Activated CD4-positive, alpha-beta memory T cell treated with anti-CD3 and anti-CD28 coated beads for 36 hours (primary cell): ENCODE measurements at regions of chr15 and their contacts with region 1.

Region 1: GRCh38 chr15:58749532-58750337 is at the start of gene ADAM10:
- DNase-seq: peak; percentile 99
- H3K4me3 Mint-ChIP-seq: peak within 1 kb of the TSS; percentile 92
- H3K27ac Mint-ChIP-seq: peak within 1 kb of the TSS; percentile 91
- H3K4me1 Mint-ChIP-seq: peaks cover 29% of the 10 kb centered on the region
- H3K27me3 Mint-ChIP-seq: no peaks in the 10 kb centered on the region
- total RNA-seq, gene ADAM10: 80.1 to 82.3 TPM

Region 2: DNA sequence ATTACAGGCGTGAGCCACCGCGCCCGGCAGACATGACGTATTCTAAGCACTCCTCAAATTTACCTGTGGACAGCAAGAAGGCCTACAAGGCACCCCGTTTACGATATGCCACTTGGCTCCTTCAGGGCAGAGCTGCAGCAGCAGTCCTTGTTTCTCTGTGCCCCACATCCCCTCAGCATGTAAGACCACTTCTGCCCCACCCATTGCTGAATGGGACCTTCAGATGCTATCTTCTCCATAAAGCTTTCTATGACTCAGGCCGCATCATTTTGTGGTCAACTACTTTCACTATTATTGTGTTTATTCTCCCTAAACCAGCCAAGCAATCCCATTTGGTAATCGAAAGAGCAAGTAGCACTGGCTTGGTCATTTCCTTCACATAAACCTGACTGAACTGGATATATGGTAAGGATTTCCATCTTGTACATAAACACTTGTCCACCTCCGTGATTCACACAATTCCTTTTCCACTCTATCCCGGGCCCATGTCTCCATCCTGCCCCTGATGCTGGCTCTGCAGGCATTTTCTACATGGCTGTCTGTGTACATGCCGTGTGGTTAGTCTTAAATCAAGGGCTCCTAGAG is 292.3 kb before region 1 on chr15:
- CTCF ChIA-PET with region 1: no interaction called
- POLR2A ChIA-PET with region 1: no interaction called
- intact Hi-C with region 1: loop called (anchors 10 kb)
- DNase-seq: peak; percentile 53
- H3K4me3 Mint-ChIP-seq: no peak overlapping the region
- H3K27ac Mint-ChIP-seq: peak overlapping the region; percentile 66
- H3K4me1 Mint-ChIP-seq: peaks cover 47% of the 10 kb centered on the region
- H3K27me3 Mint-ChIP-seq: no peaks in the 10 kb centered on the region

Region 3: GRCh38 chr15:58597943-58598828 is 151.5 kb before region 1 on chr15:
- CTCF ChIA-PET with region 1: no interaction called
- POLR2A ChIA-PET with region 1: no interaction called
- intact Hi-C with region 1: no loop called
- DNase-seq: no peak
- H3K4me3 Mint-ChIP-seq: no peak overlapping the region
- H3K27ac Mint-ChIP-seq: no peak overlapping the region
- H3K4me1 Mint-ChIP-seq: peaks cover 12% of the 10 kb centered on the region
- H3K27me3 Mint-ChIP-seq: no peaks in the 10 kb centered on the region